Left ventricle myocardium superior (tissue), 1 donor: ENCODE measurements at regions of chr4 and their contacts with region 1.

Region 1: GRCh38 chr4:94332983-94333590 is 9.5 kb downstream of the HPGDS start:
- DNase-seq: no peak
- ATAC-seq: peak; percentile 80

Region 2: GRCh38 chr4:94274912-94275311 is 58.2 kb before region 1 on chr4:
- intact Hi-C with region 1: no loop called
- DNase-seq: no peak
- ATAC-seq: no peak

Region 3: GRCh38 chr4:94732358-94732698 is 399.2 kb after region 1 on chr4:
- intact Hi-C with region 1: loop called (anchors 5 kb)
- DNase-seq: no peak
- ATAC-seq: no peak